ENCODE measurements at regions of chr2 and their contacts with region 1.

Region 1: DNA sequence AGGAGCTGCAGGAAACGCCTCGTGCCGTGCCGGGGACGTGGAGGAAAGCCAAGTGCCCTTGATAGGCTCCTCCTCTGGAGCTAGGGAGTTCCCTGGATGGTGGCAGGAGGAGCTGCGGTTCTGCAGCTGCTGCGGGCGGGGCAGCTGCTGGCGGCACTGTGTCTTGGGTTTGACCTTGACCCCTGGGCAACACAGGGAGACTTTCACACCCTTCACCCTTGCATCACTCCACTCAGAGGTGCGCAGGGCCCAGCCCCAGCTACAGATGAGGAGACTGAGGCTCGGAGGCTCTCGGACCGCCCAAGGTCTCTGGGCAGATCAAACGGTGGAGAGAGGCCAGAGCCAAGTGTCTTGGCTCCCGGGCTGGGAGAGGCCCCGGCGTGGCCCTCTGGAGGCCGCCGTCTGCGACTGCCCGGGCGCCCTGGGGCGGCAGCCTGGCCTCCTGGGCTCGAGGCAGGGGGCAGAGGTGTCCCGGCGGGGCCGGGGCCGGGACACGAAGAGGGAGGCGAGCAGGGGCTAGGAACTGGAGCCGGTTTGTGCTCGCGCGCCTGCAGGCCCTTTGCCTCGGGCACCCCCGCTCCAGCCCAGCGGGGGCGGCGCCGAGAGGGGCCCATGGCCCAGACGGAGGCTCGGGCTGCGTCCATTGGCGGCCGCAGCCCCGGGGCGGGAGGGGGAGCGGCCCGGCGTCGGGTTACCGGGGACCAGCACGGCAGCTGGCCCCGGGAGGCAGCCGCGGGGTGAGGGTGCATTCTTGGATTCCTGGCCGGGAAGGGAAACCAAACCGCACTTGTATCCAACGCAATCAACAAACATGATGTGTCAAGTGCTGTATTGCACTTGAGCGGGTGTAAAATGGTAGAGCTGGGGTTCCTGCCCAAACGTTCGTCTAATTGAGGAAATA is 129.6 kb upstream of the SLC1A4 start:
- DNase-seq: peak; percentile 14
- H3K4me3 ChIP-seq: peak overlapping the region; percentile 41 to 74 (median 48)
- H3K27ac ChIP-seq: peak overlapping the region; percentile 91 to 97 (median 94)
- H3K4me1 ChIP-seq: peaks cover 31 to 76% (median 44%) of the 10 kb centered on the region in 3 donors
- H3K27me3 ChIP-seq: no peaks in the 10 kb centered on the region
- CTCF ChIP-seq: peak in 1 of 6 experiments; percentile 28
- POLR2A ChIP-seq: peak in 2 of 4 donors; percentile 5 to 47

Region 2: DNA sequence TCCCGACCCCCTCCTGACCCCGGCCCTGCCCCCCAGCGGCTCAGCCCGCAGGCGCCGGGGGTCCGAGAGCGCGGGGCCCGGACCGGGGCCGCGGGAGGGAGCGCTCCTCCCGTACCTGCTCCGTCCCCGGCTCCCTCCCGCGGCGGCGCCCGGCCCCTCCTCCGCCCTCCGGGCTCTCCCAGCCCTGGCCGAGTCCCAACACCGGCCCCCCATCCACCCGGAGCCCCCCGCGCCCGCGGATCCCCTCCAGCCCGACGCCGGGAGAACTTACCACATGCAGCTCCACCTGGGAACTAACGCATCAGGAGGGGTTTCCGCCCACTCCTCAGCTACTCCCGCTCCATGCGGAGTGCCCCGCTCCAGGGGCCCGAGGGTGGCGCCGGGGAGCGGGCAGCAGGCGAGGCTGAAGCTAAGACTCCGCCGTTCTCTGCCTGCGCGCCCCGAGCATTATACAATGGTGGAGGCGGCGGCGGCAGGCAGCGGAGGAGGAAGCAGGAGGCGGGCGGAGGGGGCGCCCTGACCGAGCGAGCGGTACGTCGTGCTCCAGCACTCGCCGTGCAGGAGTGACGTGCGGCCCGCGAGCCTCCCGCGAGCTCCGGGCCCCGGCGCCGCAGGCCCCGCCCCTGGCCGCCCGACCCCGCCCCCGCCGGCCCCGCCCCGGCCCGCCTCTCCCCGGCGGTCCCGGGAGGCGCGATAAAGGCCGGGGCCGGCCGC is 206.1 kb before region 1 on chr2 and contains the start of gene SERTAD2:
- intact Hi-C with region 1: loop called (anchors 5 kb)
- DNase-seq: peak; percentile 53
- H3K4me3 ChIP-seq: peak within 1 kb of the TSS; percentile 90 to 98 (median 97)
- H3K27ac ChIP-seq: peak within 1 kb of the TSS; percentile 100
- H3K4me1 ChIP-seq: peaks cover 15 to 59% (median 36%) of the 10 kb centered on the region in 3 donors
- H3K27me3 ChIP-seq: no peaks in the 10 kb centered on the region
- CTCF ChIP-seq: peak in 4 of 6 experiments; percentile 1 to 33 (median 12)
- POLR2A ChIP-seq: peak in 3 of 4 donors; percentile 59 to 95 (median 89)
- total RNA-seq, gene SERTAD2: 19.5 to 54.0 (median 20.8) TPM

Region 3: DNA sequence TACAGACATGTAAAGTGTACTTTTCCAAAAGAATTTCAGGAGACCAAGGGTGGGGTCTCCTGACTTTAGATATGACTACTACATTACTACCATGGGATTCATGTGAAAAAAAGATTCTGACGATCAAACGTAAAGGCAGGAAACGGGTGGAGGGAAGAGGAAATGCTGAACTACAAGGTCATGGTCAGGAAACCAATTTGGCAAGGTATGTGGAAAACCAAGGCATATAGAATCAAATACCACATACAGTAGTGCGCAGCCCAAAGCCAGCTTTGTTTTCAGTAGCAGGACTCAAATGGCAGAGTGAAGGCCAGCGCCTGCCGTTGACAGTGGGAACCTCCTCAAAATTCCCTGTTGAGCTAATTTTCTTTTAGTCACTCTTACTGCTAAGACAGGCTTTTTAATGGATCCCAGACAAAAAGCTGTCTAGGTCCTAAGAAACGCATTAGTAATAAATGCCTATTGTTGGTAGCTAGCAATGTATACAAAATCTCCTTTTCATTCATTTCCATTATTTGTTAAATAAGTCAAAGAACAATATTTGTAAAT is 148.2 kb before region 1 on chr2:
- intact Hi-C with region 1: no loop called
- DNase-seq: no peak
- H3K4me3 ChIP-seq: no peak overlapping the region
- H3K27ac ChIP-seq: no peak overlapping the region
- H3K4me1 ChIP-seq: peaks cover 0 to 6% (median 0%) of the 10 kb centered on the region in 3 donors
- H3K27me3 ChIP-seq: no peaks in the 10 kb centered on the region
- CTCF ChIP-seq: no peak
- POLR2A ChIP-seq: no peak

Region 4: DNA sequence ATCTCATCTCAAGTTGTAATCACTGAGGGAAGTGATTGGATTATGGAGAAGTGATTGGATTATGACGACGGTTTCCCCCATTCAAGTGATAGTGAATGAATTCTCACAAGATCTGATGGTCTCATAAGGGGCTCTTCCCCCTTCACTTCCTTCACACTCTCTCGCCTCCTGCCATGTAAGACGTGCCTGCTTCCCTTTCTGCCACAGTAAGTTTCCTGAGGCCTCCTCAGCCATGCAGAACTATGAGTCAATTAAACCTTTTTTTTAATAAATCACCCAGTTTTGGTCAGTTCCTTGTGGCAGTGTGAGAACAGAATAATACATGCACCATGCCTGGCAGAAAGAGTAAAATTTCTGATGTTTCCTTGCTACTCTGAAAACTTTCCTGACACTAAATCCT is 233.2 kb after region 1 on chr2:
- intact Hi-C with region 1: no loop called
- DNase-seq: no peak
- H3K4me3 ChIP-seq: no peak overlapping the region
- H3K27ac ChIP-seq: no peak overlapping the region
- H3K4me1 ChIP-seq: peaks cover 0 to 14% (median 0%) of the 10 kb centered on the region in 3 donors
- H3K27me3 ChIP-seq: no peaks in the 10 kb centered on the region
- CTCF ChIP-seq: no peak
- POLR2A ChIP-seq: no peak